HepG2 (cell line): ENCODE measurements at regions of chr10 and their contacts with region 1.

Region 1: DNA sequence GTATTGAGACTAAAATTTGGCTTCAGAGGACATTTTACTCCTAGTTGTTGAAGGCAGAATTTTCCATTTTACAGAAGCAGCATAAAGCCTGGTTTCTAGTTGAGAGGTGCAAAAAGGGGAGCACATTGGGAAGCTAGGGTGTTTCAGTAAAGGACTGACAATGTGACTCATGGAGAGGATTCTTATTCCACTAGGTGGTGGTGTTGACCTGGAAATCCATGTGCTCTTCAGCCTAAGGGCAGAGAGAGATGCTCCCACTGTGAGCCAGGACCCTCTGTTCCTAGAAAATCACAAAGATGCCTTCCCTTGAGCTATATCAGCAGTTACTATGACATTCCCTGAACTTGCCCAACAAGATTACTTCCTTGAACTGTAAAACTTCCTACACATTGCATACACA is 687.8 kb downstream of the IPMK start:
- DNase-seq: peak; percentile 46
- ATAC-seq: peak; percentile 96
- H3K4me3 ChIP-seq: no peak overlapping the region
- H3K27ac ChIP-seq: no peak overlapping the region
- H3K4me1 ChIP-seq: no peaks in the 10 kb centered on the region
- H3K27me3 ChIP-seq: no peaks in the 10 kb centered on the region
- CTCF ChIP-seq: peak; percentile 73
- EP300 ChIP-seq: no peak
- POLR2A ChIP-seq: no peak
- RAD21 ChIP-seq: peak; percentile 70

Region 2: GRCh38 chr10:57338823-57339558 is 240.9 kb before region 1 on chr10:
- CTCF ChIA-PET with region 1: no interaction called
- POLR2A ChIA-PET with region 1: no interaction called
- in situ Hi-C with region 1: no loop called
- intact Hi-C with region 1: loop called (anchors 1 kb)
- DNase-seq: peak; percentile 45
- ATAC-seq: peak; percentile 54; the same call in 2 of the 3 replicates
- H3K4me3 ChIP-seq: no peak overlapping the region
- H3K27ac ChIP-seq: no peak overlapping the region
- H3K4me1 ChIP-seq: no peaks in the 10 kb centered on the region
- H3K27me3 ChIP-seq: no peaks in the 10 kb centered on the region
- CTCF ChIP-seq: peak; percentile 55
- EP300 ChIP-seq: no peak
- POLR2A ChIP-seq: no peak
- RAD21 ChIP-seq: no peak

Region 3: GRCh38 chr10:57657164-57657765 is 77.3 kb after region 1 on chr10:
- CTCF ChIA-PET with region 1: interaction called, 32 read pairs
- POLR2A ChIA-PET with region 1: no interaction called
- in situ Hi-C with region 1: loop called (anchors 10 kb)
- intact Hi-C with region 1: loop called (anchors 1 kb)
- DNase-seq: peak; percentile 53
- ATAC-seq: peak; percentile 93
- H3K4me3 ChIP-seq: no peak overlapping the region
- H3K27ac ChIP-seq: no peak overlapping the region
- H3K4me1 ChIP-seq: no peaks in the 10 kb centered on the region
- H3K27me3 ChIP-seq: no peaks in the 10 kb centered on the region
- CTCF ChIP-seq: peak; percentile 85
- EP300 ChIP-seq: no peak
- POLR2A ChIP-seq: no peak
- RAD21 ChIP-seq: peak; percentile 83

Region 4: DNA sequence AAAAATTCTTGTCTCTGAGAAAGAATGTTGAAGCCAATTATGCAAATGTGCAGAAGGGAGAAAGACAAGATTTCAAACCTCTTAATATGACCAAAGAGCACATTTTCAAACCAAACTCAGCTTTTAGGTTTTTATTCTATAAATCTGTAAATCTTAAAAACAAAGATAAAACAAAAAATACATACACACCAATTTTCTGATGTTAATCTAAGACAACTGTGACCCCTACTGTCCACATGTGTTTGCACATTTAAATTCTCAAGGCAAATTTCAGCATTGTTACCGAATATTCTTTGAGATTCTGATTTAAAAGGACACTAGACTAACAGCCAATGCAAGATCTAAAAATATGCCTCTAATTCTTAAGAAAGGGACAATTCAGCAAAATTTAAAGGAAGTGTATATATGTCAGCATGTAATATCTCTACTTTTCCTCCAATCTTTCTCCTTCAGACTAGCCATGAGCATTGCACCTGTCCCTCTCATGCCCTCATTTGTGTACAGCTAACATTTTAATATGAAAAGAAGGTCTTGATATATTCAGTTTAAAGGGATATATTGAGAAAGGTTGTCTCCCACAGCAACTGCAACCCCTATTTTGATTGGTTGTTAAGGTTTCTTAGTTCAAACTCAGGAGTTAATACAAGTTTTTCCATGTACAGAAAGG is 269.9 kb after region 1 on chr10:
- CTCF ChIA-PET with region 1: no interaction called
- POLR2A ChIA-PET with region 1: no interaction called
- in situ Hi-C with region 1: no loop called
- intact Hi-C with region 1: loop called (anchors 2 kb)
- DNase-seq: no peak
- ATAC-seq: no peak
- H3K4me3 ChIP-seq: no peak overlapping the region
- H3K27ac ChIP-seq: no peak overlapping the region
- H3K4me1 ChIP-seq: no peaks in the 10 kb centered on the region
- H3K27me3 ChIP-seq: no peaks in the 10 kb centered on the region
- CTCF ChIP-seq: no peak; the same call in 1 of the 2 replicates
- EP300 ChIP-seq: no peak
- POLR2A ChIP-seq: no peak
- RAD21 ChIP-seq: no peak

Region 5: GRCh38 chr10:58152673-58153263 is 572.8 kb after region 1 on chr10:
- CTCF ChIA-PET with region 1: no interaction called
- POLR2A ChIA-PET with region 1: no interaction called
- in situ Hi-C with region 1: no loop called
- intact Hi-C with region 1: loop called (anchors 1 kb)
- DNase-seq: peak; percentile 51
- ATAC-seq: peak; percentile 54; the same call in 2 of the 3 replicates
- H3K4me3 ChIP-seq: no peak overlapping the region
- H3K27ac ChIP-seq: no peak overlapping the region
- H3K4me1 ChIP-seq: peaks cover 33% of the 10 kb centered on the region
- H3K27me3 ChIP-seq: no peaks in the 10 kb centered on the region
- CTCF ChIP-seq: peak; percentile 67
- EP300 ChIP-seq: no peak
- POLR2A ChIP-seq: no peak
- RAD21 ChIP-seq: peak; percentile 32